ENCODE measurements at regions of chr5 and their contacts with region 1.

Region 1: GRCh38 chr5:131589510-131590348 is 45.3 kb downstream of the RAPGEF6 start:
- DNase-seq: peak; percentile 75
- ATAC-seq: peak; percentile 54
- H3K4me3 ChIP-seq: no peak overlapping the region
- H3K4me3 Mint-ChIP-seq: no peak overlapping the region
- H3K27ac ChIP-seq: peak overlapping the region in 1 of 2 donors; percentile 4
- H3K27ac Mint-ChIP-seq: no peak overlapping the region
- H3K4me1 ChIP-seq: peaks cover 13 to 19% of the 10 kb centered on the region in 2 donors
- H3K4me1 Mint-ChIP-seq: peaks cover 23% of the 10 kb centered on the region
- H3K27me3 ChIP-seq: no peaks in the 10 kb centered on the region
- H3K27me3 Mint-ChIP-seq: no peaks in the 10 kb centered on the region
- CTCF ChIP-seq: peak; percentile 96

Region 2: DNA sequence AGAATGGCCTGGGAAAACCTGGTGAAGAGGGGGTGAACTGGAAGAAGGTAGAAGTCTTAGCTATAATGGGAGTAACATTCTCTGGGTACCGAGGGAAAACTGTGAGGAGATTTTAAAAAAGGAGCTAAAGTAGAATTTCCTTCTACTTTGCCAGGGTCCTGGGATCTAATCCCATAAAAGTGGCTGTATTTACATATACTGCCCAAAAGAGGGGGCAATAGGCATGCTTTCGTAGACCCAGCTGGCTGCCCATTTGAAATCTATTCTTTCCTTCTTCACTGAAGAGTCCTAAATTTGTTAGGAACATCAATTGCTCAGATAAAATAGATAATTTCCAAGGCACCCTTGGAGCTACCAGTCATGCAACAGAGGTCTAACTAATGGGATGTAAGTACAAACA is 166.7 kb before region 1 on chr5:
- CTCF ChIA-PET with region 1: interaction called, 10 read pairs
- POLR2A ChIA-PET with region 1: no interaction called
- intact Hi-C with region 1: no loop called
- DNase-seq: no peak
- ATAC-seq: peak; percentile 21
- H3K4me3 ChIP-seq: no peak overlapping the region
- H3K4me3 Mint-ChIP-seq: no peak overlapping the region
- H3K27ac ChIP-seq: no peak overlapping the region
- H3K27ac Mint-ChIP-seq: no peak overlapping the region
- H3K4me1 ChIP-seq: no peaks in the 10 kb centered on the region
- H3K4me1 Mint-ChIP-seq: peaks cover 3% of the 10 kb centered on the region
- H3K27me3 ChIP-seq: no peaks in the 10 kb centered on the region
- H3K27me3 Mint-ChIP-seq: no peaks in the 10 kb centered on the region
- CTCF ChIP-seq: peak; percentile 47

Region 3: GRCh38 chr5:131634996-131635754 is 45.4 kb after region 1 on chr5 and contains the start of gene RAPGEF6:
- CTCF ChIA-PET with region 1: interaction called, 10 read pairs
- POLR2A ChIA-PET with region 1: no interaction called
- intact Hi-C with region 1: loop called (anchors 2 kb)
- DNase-seq: peak; percentile 100
- ATAC-seq: peak; percentile 83
- H3K4me3 ChIP-seq: peak within 1 kb of the TSS; percentile 77 to 91 (median 86)
- H3K4me3 Mint-ChIP-seq: peak within 1 kb of the TSS; percentile 95
- H3K27ac ChIP-seq: peak within 1 kb of the TSS; percentile 91 to 99
- H3K27ac Mint-ChIP-seq: peak within 1 kb of the TSS; percentile 99
- H3K4me1 ChIP-seq: peaks cover 41 to 46% of the 10 kb centered on the region in 2 donors
- H3K4me1 Mint-ChIP-seq: peaks cover 40% of the 10 kb centered on the region
- H3K27me3 ChIP-seq: no peaks in the 10 kb centered on the region
- H3K27me3 Mint-ChIP-seq: no peaks in the 10 kb centered on the region
- CTCF ChIP-seq: no peak
- total RNA-seq, gene RAPGEF6: 48.7 and 56.2 TPM in 2 replicates

Region 4: GRCh38 chr5:131693894-131694293 is 104.2 kb after region 1 on chr5:
- CTCF ChIA-PET with region 1: interaction called, 5 read pairs
- POLR2A ChIA-PET with region 1: no interaction called
- intact Hi-C with region 1: loop called (anchors 10 kb)
- DNase-seq: no peak
- ATAC-seq: no peak
- H3K4me3 ChIP-seq: no peak overlapping the region
- H3K4me3 Mint-ChIP-seq: no peak overlapping the region
- H3K27ac ChIP-seq: no peak overlapping the region
- H3K27ac Mint-ChIP-seq: no peak overlapping the region
- H3K4me1 ChIP-seq: no peaks in the 10 kb centered on the region
- H3K4me1 Mint-ChIP-seq: no peaks in the 10 kb centered on the region
- H3K27me3 ChIP-seq: no peaks in the 10 kb centered on the region
- H3K27me3 Mint-ChIP-seq: no peaks in the 10 kb centered on the region
- CTCF ChIP-seq: no peak

Region 5: GRCh38 chr5:131996207-131997025 is 406.7 kb after region 1 on chr5:
- CTCF ChIA-PET with region 1: interaction called, 29 read pairs
- POLR2A ChIA-PET with region 1: no interaction called
- intact Hi-C with region 1: no loop called
- DNase-seq: no peak
- ATAC-seq: no peak
- H3K4me3 ChIP-seq: no peak overlapping the region
- H3K4me3 Mint-ChIP-seq: no peak overlapping the region
- H3K27ac ChIP-seq: no peak overlapping the region
- H3K27ac Mint-ChIP-seq: no peak overlapping the region
- H3K4me1 ChIP-seq: no peaks in the 10 kb centered on the region
- H3K4me1 Mint-ChIP-seq: peaks cover 5% of the 10 kb centered on the region
- H3K27me3 ChIP-seq: no peaks in the 10 kb centered on the region
- H3K27me3 Mint-ChIP-seq: peaks cover 13% of the 10 kb centered on the region
- CTCF ChIP-seq: no peak

Region 6: GRCh38 chr5:132064738-132065331 is 475.1 kb after region 1 on chr5:
- CTCF ChIA-PET with region 1: interaction called, 70 read pairs
- POLR2A ChIA-PET with region 1: no interaction called
- intact Hi-C with region 1: loop called (anchors 1 kb)
- DNase-seq: peak; percentile 81
- ATAC-seq: peak; percentile 82
- H3K4me3 ChIP-seq: no peak overlapping the region
- H3K4me3 Mint-ChIP-seq: no peak overlapping the region
- H3K27ac ChIP-seq: no peak overlapping the region
- H3K27ac Mint-ChIP-seq: no peak overlapping the region
- H3K4me1 ChIP-seq: peaks cover 0 to 7% of the 10 kb centered on the region in 2 donors
- H3K4me1 Mint-ChIP-seq: peaks cover 3% of the 10 kb centered on the region
- H3K27me3 ChIP-seq: no peaks in the 10 kb centered on the region
- H3K27me3 Mint-ChIP-seq: no peaks in the 10 kb centered on the region
- CTCF ChIP-seq: peak; percentile 91

Measured in B cell (primary cell).